Activated CD4-positive, alpha-beta T cell treated with anti-CD3 and anti-CD28 coated beads for 36 hours (primary cell): ENCODE measurements at regions of chr14 and their contacts with region 1.

Region 1: GRCh38 chr14:52961060-52961639 is 10.3 kb upstream of the FERMT2 start:
- DNase-seq: peak; percentile 68
- ATAC-seq: peak; percentile 91
- H3K4me3 Mint-ChIP-seq: no peak overlapping the region
- H3K27ac Mint-ChIP-seq: no peak overlapping the region
- H3K4me1 Mint-ChIP-seq: peaks cover 6% of the 10 kb centered on the region
- H3K27me3 Mint-ChIP-seq: no peaks in the 10 kb centered on the region

Region 2: DNA sequence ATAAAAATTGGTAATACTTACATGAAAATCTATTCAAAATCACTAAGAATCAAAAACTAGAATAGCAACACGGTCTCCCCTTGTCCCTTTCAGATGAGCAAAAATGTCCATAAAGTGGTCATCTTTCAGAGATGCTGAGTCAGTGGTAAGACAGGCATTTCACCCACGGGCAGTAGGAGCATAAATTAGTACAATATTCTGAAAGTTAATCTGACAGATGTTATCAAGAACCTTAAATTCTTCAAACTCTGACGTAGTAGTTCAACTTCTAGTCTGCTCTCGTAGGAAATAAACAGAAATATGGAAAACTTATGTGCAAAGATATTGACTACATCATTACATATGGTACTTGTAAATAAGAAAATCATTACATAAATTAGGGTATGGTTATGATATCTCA is 136.6 kb before region 1 on chr14:
- CTCF ChIA-PET with region 1: interaction called, 54 read pairs
- POLR2A ChIA-PET with region 1: no interaction called
- intact Hi-C with region 1: loop called (anchors 1 kb)
- DNase-seq: no peak
- ATAC-seq: no peak
- H3K4me3 Mint-ChIP-seq: no peak overlapping the region
- H3K27ac Mint-ChIP-seq: no peak overlapping the region
- H3K4me1 Mint-ChIP-seq: peaks cover 3% of the 10 kb centered on the region
- H3K27me3 Mint-ChIP-seq: peaks cover 3% of the 10 kb centered on the region

Region 3: DNA sequence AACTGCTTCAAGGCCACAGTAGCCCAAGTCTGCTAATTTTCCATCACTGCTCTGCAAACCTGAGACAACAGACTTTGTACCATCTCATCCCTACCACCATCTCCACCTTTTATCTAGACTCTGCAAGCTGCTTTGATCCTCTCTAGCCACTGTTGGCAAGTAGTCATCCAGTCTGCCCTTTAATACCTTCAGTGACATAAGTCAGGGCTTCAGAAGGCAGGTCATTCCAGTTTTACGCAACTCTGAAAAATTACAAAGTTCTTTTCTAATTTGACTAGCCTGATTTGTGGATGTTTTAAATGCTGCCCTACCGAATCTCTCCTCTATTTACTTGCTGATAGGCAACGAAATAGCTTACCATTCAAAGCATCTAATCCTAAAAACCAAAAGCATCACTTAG is 13.1 kb before region 1 on chr14:
- CTCF ChIA-PET with region 1: interaction called, 10 read pairs
- POLR2A ChIA-PET with region 1: no interaction called
- intact Hi-C with region 1: no loop called
- DNase-seq: no peak
- ATAC-seq: no peak
- H3K4me3 Mint-ChIP-seq: no peak overlapping the region
- H3K27ac Mint-ChIP-seq: no peak overlapping the region
- H3K4me1 Mint-ChIP-seq: peaks cover 22% of the 10 kb centered on the region
- H3K27me3 Mint-ChIP-seq: peaks cover 49% of the 10 kb centered on the region